Esophagus muscularis mucosa (tissue), 4 donors: ENCODE measurements at regions of chr10 and their contacts with region 1.

Region 1: GRCh38 chr10:72328045-72328828 is 26.5 kb downstream of the DNAJB12 start:
- DNase-seq: peak; percentile 92
- H3K4me3 ChIP-seq: peak overlapping the region in 1 of 4 donors; percentile 18
- H3K27ac ChIP-seq: peak overlapping the region; percentile 40 to 74 (median 62)
- H3K4me1 ChIP-seq: peaks cover 66 to 76% (median 69%) of the 10 kb centered on the region in 4 donors
- H3K27me3 ChIP-seq: no peaks in the 10 kb centered on the region
- CTCF ChIP-seq: peak; percentile 68 to 78 (median 69)
- EP300 ChIP-seq: no peak
- POLR2A ChIP-seq: no peak

Region 2: DNA sequence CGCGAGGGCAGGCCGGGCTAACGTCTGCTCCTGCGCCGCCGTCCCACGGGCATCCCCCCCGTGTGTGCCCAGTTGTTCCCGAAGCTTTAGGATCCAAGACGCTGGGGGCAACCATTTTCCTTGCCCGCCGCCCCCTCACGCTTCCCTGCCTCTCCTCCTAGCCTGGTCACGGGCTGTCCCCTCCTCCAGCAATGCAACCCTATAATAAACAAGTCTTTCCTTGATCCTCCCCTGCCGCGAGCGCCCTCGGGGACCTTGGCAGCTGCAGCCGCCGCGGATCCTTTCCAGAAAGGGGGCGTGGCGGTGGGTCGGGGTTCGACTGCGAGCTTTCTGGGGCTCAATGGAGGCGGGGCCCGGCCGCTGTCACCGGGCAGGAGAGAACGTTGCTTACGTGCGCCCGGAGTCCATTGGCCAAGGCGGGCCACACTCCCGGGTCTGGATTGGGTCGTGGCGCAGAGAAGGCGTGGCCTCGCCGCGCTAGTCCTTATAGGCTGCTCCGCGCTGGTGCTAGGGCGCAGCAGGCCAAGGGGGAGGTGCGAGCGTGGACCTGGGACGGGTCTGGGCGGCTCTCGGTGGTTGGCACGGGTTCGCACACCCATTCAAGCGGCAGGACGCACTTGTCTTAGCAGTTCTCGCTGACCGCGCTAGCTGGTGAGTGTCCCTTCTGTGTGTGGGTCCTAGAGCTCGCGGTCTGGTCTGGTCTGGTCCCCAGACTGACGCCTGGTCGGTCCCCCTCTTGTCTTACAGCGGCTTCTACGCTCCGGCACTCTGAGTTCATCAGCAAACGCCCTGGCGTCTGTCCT is 54.6 kb before region 1 on chr10 and contains the start of gene DDIT4:
- intact Hi-C with region 1: loop called (anchors 2 kb)
- DNase-seq: peak; percentile 100
- H3K4me3 ChIP-seq: peak within 1 kb of the TSS; percentile 65 to 95 (median 86)
- H3K27ac ChIP-seq: peak within 1 kb of the TSS; percentile 98 to 100 (median 99)
- H3K4me1 ChIP-seq: peaks cover 27 to 47% (median 37%) of the 10 kb centered on the region in 4 donors
- H3K27me3 ChIP-seq: no peaks in the 10 kb centered on the region
- CTCF ChIP-seq: no peak
- EP300 ChIP-seq: no peak
- POLR2A ChIP-seq: peak; percentile 99
- total RNA-seq, gene DDIT4: 77.4 to 247 (median 146) TPM